ENCODE measurements at regions of chr17 and their contacts with region 1.

Region 1: GRCh38 chr17:74748529-74749365 is at the start of gene NHERF1:
- DNase-seq: no peak
- H3K4me3 ChIP-seq: peak within 1 kb of the TSS; percentile 47 to 71 (median 57)
- H3K27ac ChIP-seq: no peak within 1 kb of the TSS
- H3K4me1 ChIP-seq: peaks cover 4% of the 10 kb centered on the region
- H3K27me3 ChIP-seq: no peaks in the 10 kb centered on the region
- CTCF ChIP-seq: peak; percentile 13 to 46
- POLR2A ChIP-seq: peak; percentile 92
- total RNA-seq, gene NHERF1: 26.8 and 26.9 TPM in 2 replicates

Region 2: DNA sequence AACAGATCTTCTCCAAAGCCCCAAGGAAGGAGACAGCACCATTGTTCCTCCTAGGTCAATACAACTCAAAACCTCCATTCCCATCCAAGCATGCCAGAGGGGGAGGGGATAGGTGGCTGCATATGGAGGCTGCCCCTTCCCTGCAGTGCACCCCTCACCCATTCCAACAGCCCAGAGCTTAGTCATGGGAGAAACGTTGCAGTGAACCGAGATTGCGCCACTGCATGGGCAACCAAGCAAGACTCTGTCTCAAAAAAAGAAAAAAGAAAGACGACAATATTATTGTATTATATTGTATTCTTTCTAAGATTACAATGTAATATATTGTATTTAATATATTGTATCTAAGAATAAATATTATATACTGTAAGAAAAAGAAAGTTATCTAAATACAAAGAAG is 88.8 kb before region 1 on chr17:
- CTCF ChIA-PET with region 1: interaction called, 14 read pairs
- POLR2A ChIA-PET with region 1: no interaction called
- dilution Hi-C with region 1: no loop called
- intact Hi-C with region 1: no loop called
- DNase-seq: no peak
- H3K4me3 ChIP-seq: no peak overlapping the region
- H3K27ac ChIP-seq: no peak overlapping the region
- H3K4me1 ChIP-seq: no peaks in the 10 kb centered on the region
- H3K27me3 ChIP-seq: no peaks in the 10 kb centered on the region
- CTCF ChIP-seq: no peak
- POLR2A ChIP-seq: no peak

Region 3: GRCh38 chr17:74770498-74771318 is 22.0 kb after region 1 on chr17:
- CTCF ChIA-PET with region 1: interaction called, 84 read pairs
- POLR2A ChIA-PET with region 1: interaction called, 4 read pairs
- dilution Hi-C with region 1: no loop called
- intact Hi-C with region 1: loop called (anchors 1 kb)
- DNase-seq: peak; percentile 43
- H3K4me3 ChIP-seq: no peak overlapping the region
- H3K27ac ChIP-seq: no peak overlapping the region
- H3K4me1 ChIP-seq: no peaks in the 10 kb centered on the region
- H3K27me3 ChIP-seq: no peaks in the 10 kb centered on the region
- CTCF ChIP-seq: peak; percentile 66 to 76
- POLR2A ChIP-seq: no peak

Region 4: DNA sequence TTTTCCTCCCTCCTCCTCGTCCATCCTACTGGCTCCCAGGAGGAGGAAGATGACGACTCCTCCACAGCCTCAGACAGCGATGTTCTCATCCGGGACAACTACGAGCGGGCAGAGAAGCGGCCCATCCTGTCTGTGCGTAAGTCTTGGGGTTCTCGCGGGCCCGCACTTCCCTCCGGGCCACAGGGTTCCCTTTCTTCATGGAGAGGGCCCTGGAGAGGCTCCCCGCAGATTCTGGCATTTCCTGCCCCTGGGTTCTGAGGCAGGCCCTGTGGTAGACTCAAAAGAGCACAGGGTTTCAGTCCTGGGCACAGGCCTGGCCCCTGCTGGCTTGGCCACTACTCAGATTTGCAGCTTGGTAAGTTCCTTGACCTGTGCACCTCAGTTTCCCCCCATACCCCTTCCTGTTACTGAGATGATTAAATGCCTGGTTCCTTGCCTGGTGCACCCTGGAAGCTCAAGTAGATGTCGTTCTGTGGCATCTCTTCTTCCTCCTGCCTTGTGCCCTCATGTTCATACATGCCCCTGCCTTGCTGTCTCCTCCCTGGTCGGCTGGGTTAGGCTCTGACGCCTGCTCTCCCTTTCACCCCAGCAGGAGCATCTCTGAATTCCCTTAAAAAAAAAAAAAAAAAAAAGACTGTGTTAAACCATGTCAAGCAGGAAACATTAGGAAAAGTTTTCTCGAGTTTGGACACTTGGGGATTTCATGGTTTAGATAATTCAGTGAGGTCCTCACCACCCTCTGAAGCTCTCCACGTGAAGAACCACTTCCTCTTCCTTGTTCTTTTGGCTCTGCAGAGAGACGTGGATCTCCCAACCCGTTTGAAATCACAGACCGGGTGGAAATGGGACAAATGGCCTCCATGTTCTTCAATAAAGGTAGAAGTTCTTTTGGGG is 41.7 kb after region 1 on chr17:
- CTCF ChIA-PET with region 1: interaction called, 27 read pairs
- POLR2A ChIA-PET with region 1: no interaction called
- dilution Hi-C with region 1: no loop called
- intact Hi-C with region 1: loop called (anchors 5 kb)
- DNase-seq: no peak
- H3K4me3 ChIP-seq: no peak overlapping the region
- H3K27ac ChIP-seq: no peak overlapping the region
- H3K4me1 ChIP-seq: no peaks in the 10 kb centered on the region
- H3K27me3 ChIP-seq: no peaks in the 10 kb centered on the region
- CTCF ChIP-seq: no peak
- POLR2A ChIP-seq: no peak

Region 5: DNA sequence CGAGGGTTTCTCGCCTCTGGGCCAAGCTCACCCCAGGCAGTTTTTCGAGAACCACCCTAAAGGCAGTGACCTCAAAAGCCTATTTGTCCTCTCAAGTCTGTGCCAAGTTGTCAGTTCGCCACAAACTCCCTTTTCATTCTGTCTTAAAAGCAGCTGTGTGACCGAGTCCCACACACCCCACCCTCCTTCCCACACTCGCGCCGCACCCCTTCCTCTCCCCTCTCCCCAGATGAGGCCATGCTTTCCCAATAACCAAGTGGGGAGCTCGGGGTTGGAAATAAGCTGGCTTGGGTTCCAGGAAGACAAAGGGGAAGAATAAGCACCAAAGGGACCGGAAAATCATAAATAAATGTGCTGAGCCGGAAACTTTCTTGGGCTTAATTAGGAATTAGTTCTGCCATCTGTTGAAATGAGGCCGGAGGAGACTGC is 74.2 kb after region 1 on chr17:
- CTCF ChIA-PET with region 1: no interaction called
- POLR2A ChIA-PET with region 1: no interaction called
- dilution Hi-C with region 1: no loop called
- intact Hi-C with region 1: no loop called
- DNase-seq: no peak
- H3K4me3 ChIP-seq: no peak overlapping the region
- H3K27ac ChIP-seq: no peak overlapping the region
- H3K4me1 ChIP-seq: peaks cover 13% of the 10 kb centered on the region
- H3K27me3 ChIP-seq: no peaks in the 10 kb centered on the region
- CTCF ChIP-seq: no peak
- POLR2A ChIP-seq: no peak

Region 6: GRCh38 chr17:74864866-74865395 is 116.2 kb after region 1 on chr17:
- CTCF ChIA-PET with region 1: interaction called, 83 read pairs
- POLR2A ChIA-PET with region 1: no interaction called
- dilution Hi-C with region 1: no loop called
- intact Hi-C with region 1: loop called (anchors 1 kb)
- DNase-seq: peak; percentile 63
- H3K4me3 ChIP-seq: no peak overlapping the region
- H3K27ac ChIP-seq: no peak overlapping the region
- H3K4me1 ChIP-seq: peaks cover 18% of the 10 kb centered on the region
- H3K27me3 ChIP-seq: peaks cover 12 to 19% of the 10 kb centered on the region in 2 experiments
- CTCF ChIP-seq: peak; percentile 93 to 94
- POLR2A ChIP-seq: no peak